ENCODE measurements at regions of chr10 and their contacts with region 1.

Region 1: DNA sequence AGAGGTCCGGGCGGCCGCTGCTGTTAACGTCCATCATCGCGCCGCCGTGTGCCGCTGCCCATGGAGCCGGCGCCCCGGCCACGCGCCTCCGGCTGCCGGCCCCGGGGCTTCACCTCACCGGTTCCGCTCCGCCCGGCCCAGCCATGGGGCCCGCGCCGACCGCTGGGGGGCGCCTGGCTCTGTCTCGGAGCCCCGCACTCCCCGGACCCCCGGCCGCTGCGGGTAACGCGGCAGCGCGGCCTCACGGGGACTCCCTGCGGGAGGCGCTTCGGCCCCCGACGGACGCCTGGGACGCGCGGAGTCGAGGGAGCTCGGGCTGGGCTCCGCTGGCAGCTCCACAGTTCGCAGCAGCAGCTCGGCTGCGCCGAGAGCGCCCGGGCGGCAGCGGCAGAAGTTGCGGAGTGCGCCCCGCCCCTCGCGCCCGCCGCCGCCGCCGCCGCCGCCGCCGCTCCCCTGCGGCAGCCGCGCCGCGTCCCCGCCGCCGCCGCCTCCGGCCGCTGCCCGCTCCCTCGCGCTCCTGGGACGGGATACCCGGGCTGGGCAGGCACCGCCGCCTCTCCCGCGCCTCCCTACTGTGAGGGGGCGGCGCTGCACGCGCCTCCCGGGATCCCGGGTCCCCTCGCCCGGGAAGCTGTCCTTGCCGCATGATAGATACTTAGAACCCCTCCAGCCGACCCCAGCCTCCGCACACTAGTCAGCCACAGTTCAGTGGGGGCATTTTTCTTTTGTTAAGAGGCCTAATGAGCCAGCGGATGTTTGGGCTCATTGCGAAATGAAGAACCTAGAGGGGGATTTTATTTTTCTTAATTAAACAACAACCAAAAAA is at the start of gene HTR7:
- DNase-seq: peak in 1 of 2 donors; percentile 73
- H3K4me3 ChIP-seq: peak within 1 kb of the TSS; percentile 71 to 85
- H3K27ac ChIP-seq: peak within 1 kb of the TSS; percentile 56 to 77
- H3K4me1 ChIP-seq: peaks cover 0 to 5% of the 10 kb centered on the region in 2 donors
- H3K27me3 ChIP-seq: no peaks in the 10 kb centered on the region
- CTCF ChIP-seq: peak; percentile 19 to 65 (median 28)
- total RNA-seq, gene HTR7: 1.8 TPM

Region 2: DNA sequence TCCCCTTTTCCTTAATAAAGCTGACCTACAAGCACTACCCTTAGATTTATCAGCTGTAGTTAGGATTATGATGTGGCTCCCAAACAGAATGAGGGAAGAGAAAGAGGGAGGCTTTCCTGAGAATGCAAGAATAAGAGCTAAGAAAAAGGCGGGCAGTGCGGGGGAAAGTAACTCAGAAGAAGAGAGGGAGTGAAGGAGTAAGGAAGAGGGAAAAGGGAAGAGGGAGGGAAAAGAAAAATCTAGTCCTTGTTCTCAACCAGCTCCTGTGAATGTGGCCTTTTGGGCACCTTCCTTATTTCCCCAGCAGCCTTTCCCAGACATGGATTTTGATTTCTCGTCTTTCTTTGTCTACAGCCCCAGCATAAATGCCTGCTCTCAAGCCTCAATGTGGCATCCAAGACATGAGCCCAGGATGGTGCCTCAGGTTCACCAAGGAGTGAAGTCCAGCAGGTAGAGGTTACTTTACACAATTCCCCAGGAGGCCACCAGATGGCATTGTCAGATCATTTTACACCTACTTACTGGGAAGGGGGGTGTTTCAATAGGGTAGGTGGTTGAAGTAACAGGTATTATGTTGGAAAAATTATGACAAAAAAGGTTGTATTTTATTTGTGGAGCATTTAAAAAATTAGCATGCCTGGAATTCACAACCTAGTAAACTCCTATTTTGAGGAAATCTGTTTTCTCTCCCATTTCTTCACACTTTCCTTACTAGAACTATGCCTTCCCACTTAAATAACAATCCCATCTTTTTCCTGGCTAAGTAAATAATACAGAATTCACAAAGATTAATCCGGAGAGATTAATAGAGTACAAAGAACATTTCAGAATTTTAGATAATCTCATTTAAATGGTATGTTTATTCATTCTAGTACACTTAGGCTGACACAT is 106.5 kb before region 1 on chr10:
- intact Hi-C with region 1: loop called (anchors 5 kb)
- DNase-seq: no peak
- H3K4me3 ChIP-seq: no peak overlapping the region
- H3K27ac ChIP-seq: no peak overlapping the region
- H3K4me1 ChIP-seq: no peaks in the 10 kb centered on the region
- H3K27me3 ChIP-seq: no peaks in the 10 kb centered on the region
- CTCF ChIP-seq: peak; percentile 46 to 76 (median 61)

Measured in ascending aorta (tissue), 2 donors.